Activated CD4-positive, alpha-beta T cell treated with anti-CD3 and anti-CD28 coated beads for 36 hours (primary cell): ENCODE measurements at regions of chr13 and their contacts with region 1.

Region 1: GRCh38 chr13:102405496-102406100 is 3.8 kb upstream of the FGF14 start:
- DNase-seq: peak; percentile 25
- ATAC-seq: no peak
- H3K4me3 Mint-ChIP-seq: no peak overlapping the region
- H3K27ac Mint-ChIP-seq: no peak overlapping the region
- H3K4me1 Mint-ChIP-seq: peaks cover 19% of the 10 kb centered on the region
- H3K27me3 Mint-ChIP-seq: peaks cover 54% of the 10 kb centered on the region

Region 2: GRCh38 chr13:101080616-101081015 is 1325.0 kb before region 1 on chr13:
- CTCF ChIA-PET with region 1: no interaction called
- POLR2A ChIA-PET with region 1: interaction called, 15 read pairs
- intact Hi-C with region 1: no loop called
- DNase-seq: no peak
- ATAC-seq: no peak
- H3K4me3 Mint-ChIP-seq: no peak overlapping the region
- H3K27ac Mint-ChIP-seq: no peak overlapping the region
- H3K4me1 Mint-ChIP-seq: no peaks in the 10 kb centered on the region
- H3K27me3 Mint-ChIP-seq: peaks cover 4% of the 10 kb centered on the region